CD4-positive, alpha-beta memory T cell (primary cell): ENCODE measurements at regions of chr17 and their contacts with region 1.

Region 1: GRCh38 chr17:58006924-58007780 is at the start of gene SRSF1:
- DNase-seq: peak; percentile 98 to 99 (median 99)
- H3K4me3 ChIP-seq: peak within 1 kb of the TSS; percentile 96 to 98
- H3K4me3 Mint-ChIP-seq: peak within 1 kb of the TSS; percentile 96 to 100 (median 100)
- H3K27ac ChIP-seq: peak within 1 kb of the TSS; percentile 97
- H3K27ac Mint-ChIP-seq: peak within 1 kb of the TSS; percentile 98 to 100 (median 99)
- H3K4me1 ChIP-seq: peaks cover 46% of the 10 kb centered on the region
- H3K4me1 Mint-ChIP-seq: peaks cover 30 to 61% (median 44%) of the 10 kb centered on the region in 4 donors
- H3K27me3 ChIP-seq: no peaks in the 10 kb centered on the region
- H3K27me3 Mint-ChIP-seq: no peaks in the 10 kb centered on the region
- total RNA-seq, gene SRSF1: 242 to 257 TPM

Region 2: GRCh38 chr17:57255776-57256681 is 751.1 kb before region 1 on chr17 and contains the start of gene MSI2:
- CTCF ChIA-PET with region 1: no interaction called
- POLR2A ChIA-PET with region 1: no interaction called
- intact Hi-C with region 1: loop called (anchors 1 kb)
- DNase-seq: peak; percentile 88 to 95 (median 89)
- H3K4me3 ChIP-seq: peak within 1 kb of the TSS; percentile 62 to 72
- H3K4me3 Mint-ChIP-seq: peak within 1 kb of the TSS; percentile 87 to 97 (median 94)
- H3K27ac ChIP-seq: peak within 1 kb of the TSS; percentile 77
- H3K27ac Mint-ChIP-seq: peak within 1 kb of the TSS; percentile 88 to 99 (median 94)
- H3K4me1 ChIP-seq: peaks cover 38% of the 10 kb centered on the region
- H3K4me1 Mint-ChIP-seq: peaks cover 34 to 62% (median 42%) of the 10 kb centered on the region in 4 donors
- H3K27me3 ChIP-seq: no peaks in the 10 kb centered on the region
- H3K27me3 Mint-ChIP-seq: no peaks in the 10 kb centered on the region
- total RNA-seq, gene MSI2: 107 to 110 TPM

Region 3: DNA sequence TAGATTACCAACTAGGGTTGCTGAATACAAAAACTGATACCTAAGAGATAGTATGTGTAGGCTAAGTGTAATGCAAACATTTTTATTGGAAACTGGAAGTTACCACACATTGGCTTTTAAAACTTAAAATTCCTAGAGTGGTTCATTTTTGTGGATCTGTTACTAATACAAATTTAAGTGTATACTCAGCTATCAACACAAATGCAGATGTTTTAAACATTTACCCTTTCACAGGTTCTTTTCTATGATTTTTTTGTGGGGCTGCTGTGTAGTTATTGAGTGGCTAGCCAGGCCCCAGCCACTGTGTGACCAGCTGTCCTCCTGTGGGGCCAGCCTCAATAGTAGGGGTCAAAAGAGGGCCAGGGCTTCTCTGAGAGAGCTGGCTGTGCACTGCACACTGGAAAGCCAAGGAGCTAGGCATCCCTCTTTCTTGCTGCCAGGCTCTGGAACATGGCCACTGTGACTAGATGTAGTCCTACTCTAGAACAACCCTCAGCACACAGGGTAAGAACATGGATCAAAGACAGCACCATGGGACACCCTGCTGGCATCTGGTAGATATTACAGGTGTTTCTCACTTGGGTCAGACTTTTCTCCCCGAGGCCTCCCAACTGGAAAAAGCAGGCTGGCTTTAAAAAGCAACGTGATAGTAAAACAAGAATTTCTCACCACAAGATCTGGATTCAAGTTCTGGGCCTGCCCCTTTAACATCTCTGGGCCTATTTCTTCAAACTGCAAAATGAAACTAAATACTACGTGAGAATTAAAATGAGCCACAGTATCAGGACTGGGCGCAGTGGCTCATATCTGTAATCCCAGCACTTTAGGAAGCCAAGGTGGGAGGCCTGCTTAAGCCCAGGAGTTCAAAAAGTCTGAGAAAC is 11.8 kb before region 1 on chr17:
- CTCF ChIA-PET with region 1: interaction called, 41 read pairs
- POLR2A ChIA-PET with region 1: interaction called, 85 read pairs
- intact Hi-C with region 1: no loop called
- DNase-seq: peak; percentile 56 to 65 (median 59)
- H3K4me3 ChIP-seq: no peak overlapping the region
- H3K4me3 Mint-ChIP-seq: peak overlapping the region in 4 of 8 donors; percentile 2 to 74 (median 33)
- H3K27ac ChIP-seq: peak overlapping the region; percentile 29
- H3K27ac Mint-ChIP-seq: peak overlapping the region; percentile 59 to 88 (median 76)
- H3K4me1 ChIP-seq: peaks cover 28% of the 10 kb centered on the region
- H3K4me1 Mint-ChIP-seq: peaks cover 22 to 47% (median 36%) of the 10 kb centered on the region in 4 donors
- H3K27me3 ChIP-seq: no peaks in the 10 kb centered on the region
- H3K27me3 Mint-ChIP-seq: no peaks in the 10 kb centered on the region

Region 4: DNA sequence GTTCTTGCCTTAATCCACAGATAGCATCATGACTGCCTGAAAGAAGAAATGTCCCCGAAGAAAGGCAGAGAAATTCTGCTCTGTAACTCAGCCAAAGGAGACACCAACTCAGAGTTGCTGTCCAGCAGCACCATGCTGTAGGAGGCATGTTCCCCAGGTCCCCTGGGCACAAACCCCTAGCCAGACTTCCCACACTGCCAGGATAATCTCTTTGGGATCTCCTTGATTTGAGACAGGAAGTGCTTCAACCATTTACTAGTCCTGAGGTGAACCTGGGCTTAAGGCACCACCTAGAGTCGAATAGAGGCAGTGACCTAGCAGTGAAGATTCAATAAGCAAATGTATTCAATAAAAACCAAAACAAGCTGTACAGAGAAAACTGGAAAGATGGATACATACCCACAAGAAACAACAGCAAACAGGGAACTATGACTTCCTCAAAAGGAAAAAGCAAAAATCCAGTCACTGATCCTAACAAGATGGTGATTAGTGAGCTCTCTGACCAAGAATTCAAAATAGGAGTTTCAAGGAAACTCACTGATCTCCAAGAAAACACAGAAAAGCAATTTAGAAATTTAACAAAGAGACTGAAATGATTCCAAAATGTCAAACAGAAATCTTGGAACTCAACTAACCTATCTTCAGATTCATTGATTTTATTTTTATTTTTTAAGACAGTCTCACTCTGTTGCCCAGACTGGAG is 165.4 kb after region 1 on chr17:
- CTCF ChIA-PET with region 1: interaction called, 4 read pairs
- POLR2A ChIA-PET with region 1: interaction called, 22 read pairs
- intact Hi-C with region 1: loop called (anchors 1 kb)
- DNase-seq: peak; percentile 62 to 72 (median 66)
- H3K4me3 ChIP-seq: no peak overlapping the region
- H3K4me3 Mint-ChIP-seq: peak overlapping the region; percentile 16 to 69 (median 51)
- H3K27ac ChIP-seq: no peak overlapping the region
- H3K27ac Mint-ChIP-seq: peak overlapping the region in 6 of 7 donors; percentile 15 to 92 (median 89)
- H3K4me1 ChIP-seq: peaks cover 47% of the 10 kb centered on the region
- H3K4me1 Mint-ChIP-seq: peaks cover 40 to 50% (median 44%) of the 10 kb centered on the region in 4 donors
- H3K27me3 ChIP-seq: no peaks in the 10 kb centered on the region
- H3K27me3 Mint-ChIP-seq: peaks cover under 1% of the 10 kb centered on the region in 2 donors

Region 5: DNA sequence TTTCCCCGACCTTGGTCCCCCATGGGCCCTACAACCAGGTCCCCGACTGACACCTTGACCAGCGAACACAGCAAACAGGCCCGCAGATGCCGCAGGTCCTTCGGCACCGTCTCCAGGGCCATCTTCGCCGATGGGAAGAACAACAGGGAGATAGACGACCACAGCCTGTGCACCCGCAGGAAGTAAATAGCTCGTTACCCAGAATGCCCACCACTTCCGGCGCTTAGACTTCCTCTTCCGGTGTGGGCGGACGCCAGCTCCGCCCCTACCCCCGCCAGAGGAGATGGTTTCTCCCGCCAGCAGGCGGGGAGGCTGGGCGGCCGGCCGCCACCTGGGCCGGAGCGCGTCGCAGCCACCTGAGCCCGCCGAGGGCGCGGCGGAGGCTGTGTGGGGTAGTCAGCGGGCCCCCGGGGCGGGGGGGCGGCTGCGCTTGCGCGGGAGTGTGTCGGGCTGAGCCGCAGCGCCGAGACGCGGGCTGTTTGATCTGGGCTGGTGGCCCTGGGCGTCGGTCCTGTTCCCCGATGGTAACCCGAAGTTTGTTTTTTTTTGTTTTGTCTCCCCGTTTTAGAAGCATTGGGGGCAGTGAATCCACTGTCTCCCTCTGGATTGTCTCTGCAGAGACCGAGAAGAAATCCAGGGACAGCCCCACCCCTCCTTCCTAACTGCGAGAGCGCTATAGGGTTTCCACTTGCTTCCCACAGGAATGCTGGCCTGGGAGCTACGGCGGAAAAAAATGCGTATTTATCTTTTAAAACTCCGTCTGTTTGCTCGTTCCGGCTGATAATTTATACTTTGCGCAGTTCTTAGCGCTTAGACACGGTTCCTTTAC is 345.1 kb after region 1 on chr17 and contains the start of gene SUPT4H1:
- CTCF ChIA-PET with region 1: no interaction called
- POLR2A ChIA-PET with region 1: interaction called, 4 read pairs
- intact Hi-C with region 1: loop called (anchors 1 kb)
- DNase-seq: peak; percentile 91 to 94 (median 94)
- H3K4me3 ChIP-seq: peak within 1 kb of the TSS; percentile 92 to 98
- H3K4me3 Mint-ChIP-seq: peak within 1 kb of the TSS; percentile 99 to 100 (median 99)
- H3K27ac ChIP-seq: peak within 1 kb of the TSS; percentile 85
- H3K27ac Mint-ChIP-seq: peak within 1 kb of the TSS; percentile 98 to 100 (median 99)
- H3K4me1 ChIP-seq: peaks cover 57% of the 10 kb centered on the region
- H3K4me1 Mint-ChIP-seq: peaks cover 37 to 65% (median 52%) of the 10 kb centered on the region in 4 donors
- H3K27me3 ChIP-seq: no peaks in the 10 kb centered on the region
- H3K27me3 Mint-ChIP-seq: no peaks in the 10 kb centered on the region
- total RNA-seq, gene SUPT4H1: 61.4 to 75.2 TPM